Activated CD4-positive, alpha-beta memory T cell treated with anti-CD3 and anti-CD28 coated beads, Interleukin-2, amount 10 ng/mL, durations not matched to agents 7 days and 5 days (primary cell): ENCODE measurements at regions of chr14 and their contacts with region 1.

Region 1: GRCh38 chr14:70809543-70810244 is 381 bp upstream of the MAP3K9 start:
- DNase-seq: peak; percentile 93
- H3K4me3 Mint-ChIP-seq: no peak overlapping the region
- H3K27ac Mint-ChIP-seq: peak overlapping the region; percentile 63
- H3K4me1 Mint-ChIP-seq: peaks cover 11% of the 10 kb centered on the region
- H3K27me3 Mint-ChIP-seq: peaks cover 10% of the 10 kb centered on the region

Region 2: GRCh38 chr14:70640938-70641547 is 168.7 kb before region 1 on chr14:
- CTCF ChIA-PET with region 1: no interaction called
- POLR2A ChIA-PET with region 1: interaction called, 23 read pairs
- DNase-seq: peak; percentile 56
- H3K4me3 Mint-ChIP-seq: peak overlapping the region; percentile 94
- H3K27ac Mint-ChIP-seq: peak overlapping the region; percentile 84
- H3K4me1 Mint-ChIP-seq: peaks cover 54% of the 10 kb centered on the region
- H3K27me3 Mint-ChIP-seq: no peaks in the 10 kb centered on the region

Region 3: DNA sequence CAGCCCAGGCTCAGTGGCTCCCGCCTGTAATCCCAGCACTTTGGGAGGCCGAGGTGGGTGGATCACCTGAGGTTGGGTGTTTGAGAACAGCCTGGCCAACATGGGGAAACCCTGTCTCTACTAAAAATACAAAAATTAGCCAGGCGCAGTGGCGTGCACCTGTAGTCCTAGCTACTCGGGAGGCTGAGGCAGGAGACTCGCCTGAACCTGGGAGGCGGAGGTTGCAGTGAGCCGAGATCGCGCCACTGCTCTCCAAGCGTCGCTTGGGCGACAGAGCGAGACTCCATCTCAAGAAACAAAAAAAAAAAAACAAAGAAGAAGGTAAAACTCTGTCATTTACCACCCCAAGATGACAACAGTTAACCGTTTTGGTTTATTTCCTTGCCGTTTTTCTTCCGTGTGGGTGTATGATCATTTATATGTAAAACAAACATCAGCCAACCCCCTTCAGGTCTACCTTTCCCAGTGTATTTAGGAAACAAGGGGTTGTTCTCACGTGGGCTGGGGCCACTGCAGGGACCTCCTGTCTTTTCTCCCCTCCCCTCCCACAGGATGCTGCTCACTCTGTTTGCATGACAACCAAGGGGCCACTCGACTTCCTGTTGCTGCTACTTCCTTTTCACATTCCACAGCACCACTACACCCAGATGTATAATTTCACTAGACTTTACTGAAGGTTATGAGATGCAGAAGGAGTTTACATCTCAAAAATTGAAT is 154.4 kb before region 1 on chr14:
- CTCF ChIA-PET with region 1: no interaction called
- POLR2A ChIA-PET with region 1: interaction called, 14 read pairs
- DNase-seq: peak; percentile 81
- H3K4me3 Mint-ChIP-seq: peak overlapping the region; percentile 76
- H3K27ac Mint-ChIP-seq: peak overlapping the region; percentile 100
- H3K4me1 Mint-ChIP-seq: peaks cover 93% of the 10 kb centered on the region
- H3K27me3 Mint-ChIP-seq: no peaks in the 10 kb centered on the region